ENCODE measurements at regions of chr9 and their contacts with region 1.

Region 1: GRCh38 chr9:114603248-114603647 is 7.8 kb upstream of the TMEM268 start:
- DNase-seq: no peak
- ATAC-seq: no peak
- H3K4me3 ChIP-seq: no peak overlapping the region
- H3K27ac ChIP-seq: no peak overlapping the region; the same call in 1 of the 2 replicates
- H3K4me1 ChIP-seq: peaks cover 50% of the 10 kb centered on the region
- H3K27me3 ChIP-seq: no peaks in the 10 kb centered on the region
- CTCF ChIP-seq: no peak
- EP300 ChIP-seq: no peak
- POLR2A ChIP-seq: no peak
- RAD21 ChIP-seq: no peak

Region 2: DNA sequence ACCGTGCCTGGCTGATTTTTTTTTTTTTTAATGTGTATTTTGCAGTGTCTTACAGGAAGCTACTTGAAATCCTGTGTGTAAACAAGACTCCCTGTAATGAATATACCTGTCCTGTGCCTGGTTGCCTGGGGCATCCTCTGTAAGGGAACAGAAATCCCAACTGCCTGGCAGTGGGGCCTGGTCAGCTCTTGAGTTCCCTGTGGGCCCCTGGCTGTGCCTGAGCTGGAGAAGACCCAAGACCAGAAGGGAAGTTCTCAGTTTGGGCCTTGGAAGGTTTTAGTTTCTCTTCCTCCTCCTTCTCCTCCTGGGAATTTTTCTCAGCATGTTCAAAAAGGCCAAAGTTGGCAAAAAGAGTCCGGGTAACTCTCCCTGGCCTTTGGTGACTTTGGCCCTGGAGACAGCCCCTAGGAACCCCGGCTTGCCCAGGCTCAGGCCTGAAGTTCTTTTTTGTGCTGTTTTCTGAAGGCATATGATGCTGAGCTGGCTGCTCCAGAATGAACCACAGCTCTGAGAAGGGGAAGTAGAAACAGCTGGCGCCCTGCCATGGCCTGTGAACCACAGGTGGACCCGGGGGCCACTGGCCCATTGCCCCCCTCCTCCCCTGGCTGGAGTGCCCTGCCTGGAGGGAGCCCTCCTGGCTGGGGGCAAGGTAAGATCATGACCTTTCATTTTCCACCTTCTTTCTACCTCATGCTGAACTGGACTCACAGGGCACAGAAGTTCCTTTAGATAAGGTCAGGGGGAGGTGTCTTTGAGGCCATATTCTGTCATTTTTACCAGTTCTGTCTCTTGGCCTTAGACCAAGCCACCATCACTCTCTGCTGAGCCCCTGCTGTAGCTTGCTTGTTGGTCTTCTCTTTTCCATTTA is 13.6 kb after region 1 on chr9:
- CTCF ChIA-PET with region 1: interaction called, 11 read pairs
- POLR2A ChIA-PET with region 1: interaction called, 73 read pairs
- RAD21 ChIA-PET with region 1: interaction called, 49 read pairs
- SMC1A ChIA-PET with region 1: interaction called, 42 read pairs
- in situ Hi-C with region 1: no loop called
- intact Hi-C with region 1: no loop called
- DNase-seq: peak; percentile 72
- ATAC-seq: peak; percentile 65
- H3K4me3 ChIP-seq: peak overlapping the region; percentile 62
- H3K27ac ChIP-seq: peak overlapping the region; percentile 96
- H3K4me1 ChIP-seq: peaks cover 66% of the 10 kb centered on the region
- H3K27me3 ChIP-seq: no peaks in the 10 kb centered on the region
- CTCF ChIP-seq: no peak
- EP300 ChIP-seq: 0 out of 4 replicates have a peak, but pooled peaks of 1 of the 2 experiments have one; percentile 44
- POLR2A ChIP-seq: no peak
- RAD21 ChIP-seq: no peak